WTC11 (cell line): ENCODE measurements at regions of chr7 and their contacts with region 1.

Region 1: DNA sequence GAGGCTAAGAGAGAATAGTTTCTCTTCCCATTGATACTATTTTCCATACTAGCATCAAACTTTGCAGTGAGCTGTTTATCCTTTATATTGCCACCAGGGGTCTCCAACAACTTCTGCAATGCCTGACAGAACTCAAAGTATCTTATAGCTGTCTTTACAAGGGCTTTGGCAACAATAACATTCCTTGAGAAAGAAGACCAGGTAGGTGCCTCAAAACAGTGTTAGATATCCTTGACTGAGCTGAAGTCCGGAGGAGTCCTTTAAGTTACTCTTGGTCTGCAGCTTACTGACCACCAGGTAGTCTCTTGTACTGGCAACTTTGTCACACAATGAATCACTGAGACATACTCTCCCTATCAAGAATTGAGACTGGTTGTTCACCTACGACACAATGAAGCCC is 30.0 kb upstream of the TES start:
- DNase-seq: no peak
- ATAC-seq: peak; percentile 90
- H3K4me3 Mint-ChIP-seq: no peak overlapping the region
- H3K27ac Mint-ChIP-seq: no peak overlapping the region
- H3K4me1 Mint-ChIP-seq: no peaks in the 10 kb centered on the region
- H3K27me3 Mint-ChIP-seq: peaks cover 11% of the 10 kb centered on the region
- CTCF ChIP-seq: peak; percentile 41; the same call in 1 of the 2 replicates

Region 2: DNA sequence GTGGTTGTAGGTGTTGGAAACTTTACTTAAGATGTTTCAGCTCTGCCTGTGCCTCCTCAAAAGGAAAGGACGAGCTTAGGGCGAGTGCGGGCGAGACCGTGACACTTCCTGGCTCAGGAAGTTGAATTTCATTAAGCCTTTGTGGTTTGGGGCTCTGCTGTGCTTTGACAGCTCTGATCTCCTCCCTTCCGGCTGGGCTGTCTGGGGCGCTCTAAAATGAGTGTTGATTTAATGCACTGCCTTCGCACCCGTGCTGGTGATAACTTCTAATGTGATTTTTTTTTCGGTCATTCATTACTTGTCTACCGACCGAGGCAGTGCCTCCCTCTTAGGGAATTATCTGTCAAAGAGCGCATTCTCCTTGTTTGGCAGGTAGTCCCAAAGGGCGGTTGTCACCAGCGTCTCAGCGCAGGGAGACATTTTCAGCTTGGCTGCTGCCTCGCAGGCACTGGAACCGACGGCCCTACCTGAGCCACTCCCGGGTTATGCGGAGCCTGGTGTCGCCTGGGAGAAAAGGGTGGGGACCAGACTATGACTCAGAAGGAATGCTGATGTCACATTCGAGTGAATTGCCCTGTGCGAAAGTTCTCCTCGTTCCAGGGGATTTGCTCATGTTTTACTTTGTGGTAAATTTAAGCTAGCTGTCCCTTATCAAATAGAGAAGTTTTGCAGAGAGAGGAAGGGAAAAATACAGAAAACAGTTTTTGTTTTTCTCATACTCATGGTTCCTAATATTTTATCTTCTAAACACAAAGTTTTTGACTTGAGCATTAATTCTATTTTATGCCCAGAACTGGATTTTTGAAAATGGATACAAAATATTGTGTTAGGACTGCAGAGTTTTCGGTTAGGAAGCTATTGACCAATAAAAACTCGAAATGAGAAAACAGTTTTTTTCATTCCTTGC is 31.0 kb after region 1 on chr7:
- CTCF ChIA-PET with region 1: interaction called, 12 read pairs
- POLR2A ChIA-PET with region 1: no interaction called
- DNase-seq: peak; percentile 68
- ATAC-seq: peak; percentile 72
- H3K4me3 Mint-ChIP-seq: peak overlapping the region; percentile 88
- H3K27ac Mint-ChIP-seq: peak overlapping the region; percentile 89
- H3K4me1 Mint-ChIP-seq: peaks cover 42% of the 10 kb centered on the region
- H3K27me3 Mint-ChIP-seq: no peaks in the 10 kb centered on the region; the same call in 1 of the 2 replicates
- CTCF ChIP-seq: no peak

Region 3: GRCh38 chr7:116236020-116236630 is 55.8 kb after region 1 on chr7:
- CTCF ChIA-PET with region 1: interaction called, 100 read pairs
- POLR2A ChIA-PET with region 1: no interaction called
- DNase-seq: peak; percentile 16
- ATAC-seq: no peak
- H3K4me3 Mint-ChIP-seq: no peak overlapping the region
- H3K27ac Mint-ChIP-seq: no peak overlapping the region
- H3K4me1 Mint-ChIP-seq: peaks cover 23% of the 10 kb centered on the region
- H3K27me3 Mint-ChIP-seq: no peaks in the 10 kb centered on the region
- CTCF ChIP-seq: peak; percentile 34

Region 4: GRCh38 chr7:116443101-116443523 is 262.8 kb after region 1 on chr7:
- CTCF ChIA-PET with region 1: no interaction called
- POLR2A ChIA-PET with region 1: no interaction called
- DNase-seq: no peak
- ATAC-seq: no peak
- H3K4me3 Mint-ChIP-seq: no peak overlapping the region
- H3K27ac Mint-ChIP-seq: no peak overlapping the region
- H3K4me1 Mint-ChIP-seq: peaks cover 4% of the 10 kb centered on the region
- H3K27me3 Mint-ChIP-seq: no peaks in the 10 kb centered on the region
- CTCF ChIP-seq: no peak